ENCODE measurements at regions of chr1 and their contacts with region 1.

Region 1: DNA sequence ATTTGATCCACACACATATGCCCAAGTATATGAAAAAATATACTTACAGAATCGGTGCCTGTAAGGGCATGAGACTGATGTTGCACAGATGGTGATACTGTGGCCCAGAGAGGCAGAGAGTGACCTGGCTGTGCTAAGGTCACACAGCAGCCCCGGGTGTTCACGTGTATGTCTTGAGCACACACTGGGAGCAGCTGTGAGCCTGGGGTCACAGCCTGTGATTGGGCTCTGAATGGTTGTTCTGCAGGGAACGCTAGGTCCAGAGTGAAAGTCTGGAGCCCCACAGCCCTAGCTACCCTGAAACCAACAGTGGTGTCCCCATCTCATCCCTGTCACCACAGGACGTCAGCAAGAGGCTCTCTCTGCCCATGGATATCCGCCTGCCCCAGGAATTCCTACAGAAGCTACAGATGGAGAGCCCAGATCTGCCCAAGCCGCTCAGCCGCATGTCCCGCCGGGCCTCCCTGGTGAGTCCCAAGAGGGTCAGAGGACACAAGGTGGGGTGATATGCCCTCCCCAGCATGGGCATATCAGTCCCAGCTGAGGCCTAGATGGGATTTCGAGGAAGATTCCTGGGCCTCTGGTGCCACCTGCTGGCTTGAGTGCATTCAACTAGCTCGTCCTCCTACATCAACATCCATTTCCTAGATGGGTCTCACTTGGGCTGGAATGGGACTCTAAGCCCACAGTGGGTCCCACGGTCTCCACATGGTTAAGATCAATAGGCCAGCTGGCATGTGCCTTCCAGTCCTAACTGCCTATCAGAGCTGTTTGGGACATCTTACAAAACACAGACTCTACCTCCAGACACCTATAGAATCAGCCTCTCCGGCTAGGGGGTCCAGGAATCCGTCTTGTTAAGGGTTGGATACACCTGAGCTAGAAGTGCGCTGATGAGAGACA is 19.7 kb downstream of the CDK18 start:
- DNase-seq: peak; percentile 79
- ATAC-seq: no peak
- H3K4me3 Mint-ChIP-seq: no peak overlapping the region
- H3K27ac Mint-ChIP-seq: no peak overlapping the region
- H3K4me1 Mint-ChIP-seq: no peaks in the 10 kb centered on the region
- H3K27me3 Mint-ChIP-seq: no peaks in the 10 kb centered on the region

Region 2: GRCh38 chr1:205273551-205273982 is 250.6 kb before region 1 on chr1:
- CTCF ChIA-PET with region 1: interaction called, 30 read pairs
- POLR2A ChIA-PET with region 1: no interaction called
- DNase-seq: peak; percentile 89
- ATAC-seq: peak; percentile 93
- H3K4me3 Mint-ChIP-seq: no peak overlapping the region
- H3K27ac Mint-ChIP-seq: no peak overlapping the region
- H3K4me1 Mint-ChIP-seq: peaks cover 22% of the 10 kb centered on the region
- H3K27me3 Mint-ChIP-seq: peaks cover 11% of the 10 kb centered on the region

Region 3: DNA sequence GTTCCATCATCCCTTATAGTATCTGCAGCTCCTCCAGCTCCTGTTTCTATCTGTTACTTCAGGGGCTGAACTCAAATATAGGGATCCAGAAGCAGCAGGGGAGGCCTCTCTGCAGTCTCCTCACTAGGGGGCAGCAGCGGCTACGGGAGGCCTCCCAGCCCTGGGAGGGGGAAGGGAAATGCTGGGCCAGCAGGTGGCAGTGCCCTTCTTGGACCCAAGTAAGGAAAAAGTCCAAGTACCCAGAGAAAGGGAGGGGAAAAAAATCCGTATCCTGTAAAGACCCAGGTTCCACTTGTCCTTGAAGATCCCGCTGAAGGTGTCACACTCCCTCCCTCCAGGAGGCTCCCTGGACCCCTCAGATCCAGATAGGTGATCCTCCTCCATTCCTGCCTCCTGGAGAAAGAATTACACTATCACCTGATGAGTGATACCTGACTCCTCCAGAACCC is 188.5 kb before region 1 on chr1:
- CTCF ChIA-PET with region 1: interaction called, 54 read pairs
- POLR2A ChIA-PET with region 1: no interaction called
- DNase-seq: peak; percentile 84
- ATAC-seq: peak; percentile 90
- H3K4me3 Mint-ChIP-seq: no peak overlapping the region
- H3K27ac Mint-ChIP-seq: no peak overlapping the region
- H3K4me1 Mint-ChIP-seq: peaks cover 11% of the 10 kb centered on the region
- H3K27me3 Mint-ChIP-seq: peaks cover 38% of the 10 kb centered on the region

Region 4: GRCh38 chr1:205396967-205397616 is 127.0 kb before region 1 on chr1:
- CTCF ChIA-PET with region 1: interaction called, 75 read pairs
- POLR2A ChIA-PET with region 1: no interaction called
- DNase-seq: peak; percentile 38
- ATAC-seq: no peak
- H3K4me3 Mint-ChIP-seq: no peak overlapping the region
- H3K27ac Mint-ChIP-seq: no peak overlapping the region
- H3K4me1 Mint-ChIP-seq: no peaks in the 10 kb centered on the region
- H3K27me3 Mint-ChIP-seq: peaks cover 23% of the 10 kb centered on the region

Region 5: GRCh38 chr1:205500240-205501233 is 23.6 kb before region 1 on chr1:
- CTCF ChIA-PET with region 1: interaction called, 12 read pairs
- POLR2A ChIA-PET with region 1: no interaction called
- DNase-seq: no peak
- ATAC-seq: no peak
- H3K4me3 Mint-ChIP-seq: no peak overlapping the region
- H3K27ac Mint-ChIP-seq: no peak overlapping the region
- H3K4me1 Mint-ChIP-seq: peaks cover 12% of the 10 kb centered on the region
- H3K27me3 Mint-ChIP-seq: peaks cover 9% of the 10 kb centered on the region

Region 6: DNA sequence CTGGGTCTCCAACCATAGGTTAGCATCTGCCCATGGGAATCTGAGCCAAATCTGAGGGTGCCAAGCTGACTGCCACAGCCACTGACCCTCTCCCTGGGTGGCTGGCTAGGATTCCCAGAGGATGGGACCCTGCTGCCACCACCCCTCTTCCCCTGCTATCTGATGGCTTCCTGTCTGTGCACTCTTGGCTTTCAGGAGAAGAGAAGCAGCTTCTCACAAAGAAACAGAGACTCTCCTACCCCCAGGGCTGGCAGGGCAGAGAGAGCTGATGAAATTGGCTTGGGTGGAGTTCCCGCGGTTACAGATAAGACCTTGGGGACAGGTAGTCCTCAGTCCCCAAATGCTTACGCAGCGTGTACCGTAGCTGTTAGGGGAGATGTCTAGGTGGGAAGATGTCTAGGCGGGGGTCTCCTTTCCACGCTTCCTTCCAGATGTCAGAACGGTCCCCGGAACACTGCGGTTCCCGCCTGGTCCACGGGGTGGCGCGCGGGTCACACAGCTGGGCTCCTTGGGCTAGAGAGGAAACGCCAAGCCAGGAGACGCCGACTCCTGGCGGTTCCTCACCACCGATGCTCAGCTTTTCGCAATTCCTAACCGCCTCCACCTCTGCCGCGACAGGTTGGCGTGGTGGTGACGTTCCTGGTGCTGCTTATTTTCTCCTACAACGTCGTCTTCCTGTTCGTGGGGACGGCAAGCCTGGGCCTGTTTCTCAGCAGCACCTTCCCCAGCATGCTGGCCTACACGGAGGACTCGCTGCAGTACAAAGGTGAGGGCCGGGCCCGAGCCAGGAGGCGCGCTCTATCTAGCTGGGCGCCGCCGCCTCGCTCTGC is 67.6 kb after region 1 on chr1:
- CTCF ChIA-PET with region 1: interaction called, 24 read pairs
- POLR2A ChIA-PET with region 1: interaction called, 3 read pairs
- DNase-seq: peak; percentile 91
- ATAC-seq: peak; percentile 90
- H3K4me3 Mint-ChIP-seq: peak overlapping the region; percentile 81
- H3K27ac Mint-ChIP-seq: peak overlapping the region; percentile 95
- H3K4me1 Mint-ChIP-seq: peaks cover 42% of the 10 kb centered on the region
- H3K27me3 Mint-ChIP-seq: peaks cover 3% of the 10 kb centered on the region

Region 7: DNA sequence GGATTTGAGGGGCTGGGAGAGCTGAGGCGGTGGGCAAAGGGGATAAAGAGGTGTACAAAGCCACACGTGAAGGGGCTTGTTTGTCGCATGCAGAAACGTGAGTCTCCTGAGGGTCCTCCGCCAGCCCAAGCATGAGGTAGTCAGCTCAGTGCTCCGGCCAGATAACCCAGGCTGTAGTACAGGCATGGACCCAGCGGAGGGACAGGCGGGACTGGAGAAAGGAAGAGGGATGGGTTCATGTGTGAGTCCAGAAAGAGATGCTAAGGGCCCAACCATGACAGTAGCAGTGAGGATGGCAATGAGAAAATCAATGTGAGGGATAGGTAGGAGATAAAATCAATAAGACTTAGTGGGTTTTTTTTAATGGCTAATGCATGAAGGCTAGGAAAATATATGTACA is 121.4 kb after region 1 on chr1:
- CTCF ChIA-PET with region 1: interaction called, 11 read pairs
- POLR2A ChIA-PET with region 1: no interaction called
- DNase-seq: no peak
- ATAC-seq: no peak
- H3K4me3 Mint-ChIP-seq: no peak overlapping the region
- H3K27ac Mint-ChIP-seq: no peak overlapping the region
- H3K4me1 Mint-ChIP-seq: no peaks in the 10 kb centered on the region
- H3K27me3 Mint-ChIP-seq: peaks cover 7% of the 10 kb centered on the region